ENCODE measurements at regions of chr4 and their contacts with region 1.

Region 1: DNA sequence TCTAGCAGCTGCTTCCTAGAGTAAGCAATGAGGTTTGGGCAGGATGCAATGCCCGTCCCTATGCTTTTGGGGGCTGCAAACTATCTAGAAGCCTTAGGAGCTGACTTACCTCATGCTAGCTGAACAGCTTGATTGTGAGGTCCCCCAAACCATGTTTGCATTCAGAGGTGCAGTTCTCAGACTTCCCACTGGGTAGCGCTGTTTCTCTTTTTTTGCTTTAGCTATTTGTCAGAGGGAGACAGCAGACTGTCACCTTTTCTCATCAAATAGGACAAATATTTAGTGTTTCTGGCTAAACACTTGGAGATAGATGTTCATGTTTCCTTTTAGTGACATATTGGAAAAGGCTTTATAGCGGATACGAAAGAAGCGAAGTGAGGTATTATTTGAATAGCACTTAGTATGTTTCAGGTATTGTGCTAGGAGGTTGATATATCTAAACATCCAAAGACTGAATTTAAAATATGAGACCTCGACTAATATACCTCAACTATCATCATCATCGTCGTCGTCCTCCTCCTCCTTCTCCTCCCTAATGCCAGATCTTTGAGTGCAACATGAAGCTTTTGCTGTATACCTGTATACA is 18.7 kb upstream of the TMEM192 start:
- DNase-seq: peak; percentile 92
- H3K4me3 ChIP-seq: no peak overlapping the region
- H3K27ac ChIP-seq: no peak overlapping the region
- H3K4me1 ChIP-seq: peaks cover 0 to 7% (median 0%) of the 10 kb centered on the region in 4 donors
- H3K27me3 ChIP-seq: peaks cover 0 to 4% (median 0%) of the 10 kb centered on the region in 4 donors
- CTCF ChIP-seq: peak; percentile 83 to 93 (median 85)
- EP300 ChIP-seq: no peak
- POLR2A ChIP-seq: no peak

Region 2: GRCh38 chr4:165207431-165208220 is 76.3 kb after region 1 on chr4 and contains the start of gene KLHL2:
- intact Hi-C with region 1: loop called (anchors 5 kb)
- DNase-seq: no peak
- H3K4me3 ChIP-seq: peak within 1 kb of the TSS; percentile 81 to 98 (median 96)
- H3K27ac ChIP-seq: peak within 1 kb of the TSS; percentile 85 to 94 (median 91)
- H3K4me1 ChIP-seq: peaks cover 12 to 32% (median 27%) of the 10 kb centered on the region in 4 donors
- H3K27me3 ChIP-seq: no peaks in the 10 kb centered on the region
- CTCF ChIP-seq: no peak
- EP300 ChIP-seq: no peak
- POLR2A ChIP-seq: no peak
- total RNA-seq, gene KLHL2: 23.5 to 35.3 (median 27.2) TPM